ENCODE measurements at regions of chr10 and their contacts with region 1.

Region 1: GRCh38 chr10:108544494-108545120 is 1378.7 kb downstream of the XPNPEP1 start:
- DNase-seq: peak in 3 of 5 donors; percentile 40 to 64 (median 55)
- ATAC-seq: peak in 2 of 4 donors; percentile 42 to 51
- H3K4me3 ChIP-seq: no peak overlapping the region
- H3K27ac ChIP-seq: no peak overlapping the region
- H3K4me1 ChIP-seq: no peaks in the 10 kb centered on the region
- H3K27me3 ChIP-seq: no peaks in the 10 kb centered on the region
- CTCF ChIP-seq: peak; percentile 59 to 85 (median 73)
- POLR2A ChIP-seq: no peak

Region 2: GRCh38 chr10:106625751-106626150 is 1918.9 kb before region 1 on chr10:
- intact Hi-C with region 1: loop called in 2 of 10 experiments (anchors 10 kb)
- DNase-seq: no peak
- ATAC-seq: no peak
- H3K4me3 ChIP-seq: no peak overlapping the region
- H3K27ac ChIP-seq: no peak overlapping the region
- H3K4me1 ChIP-seq: no peaks in the 10 kb centered on the region
- H3K27me3 ChIP-seq: peaks cover 0 to 11% (median 0%) of the 10 kb centered on the region in 9 donors
- CTCF ChIP-seq: no peak
- POLR2A ChIP-seq: no peak

Region 3: DNA sequence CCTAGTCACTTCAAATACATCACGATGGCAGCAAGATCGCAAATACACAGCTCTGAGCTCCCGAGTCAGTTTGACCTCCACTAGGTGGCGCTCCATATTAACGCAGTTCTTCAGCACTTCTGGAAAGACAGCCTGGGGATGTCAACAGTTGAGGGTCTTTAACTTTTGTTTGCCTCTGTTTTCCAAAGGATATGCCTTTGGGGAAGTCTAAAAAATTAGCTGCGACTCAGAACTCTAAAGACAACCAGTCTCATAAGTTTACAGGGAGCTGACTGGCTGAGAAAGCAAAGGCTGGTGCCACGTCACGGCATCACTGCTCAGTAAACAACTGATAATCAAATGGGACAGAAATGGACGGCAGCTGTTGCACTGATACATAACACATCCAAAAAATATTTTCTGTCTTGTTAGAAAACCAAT is 1838.9 kb before region 1 on chr10:
- intact Hi-C with region 1: loop called in 3 of 10 experiments (anchors 10 kb)
- DNase-seq: peak in 4 of 5 donors; percentile 33 to 49 (median 43)
- ATAC-seq: peak in 3 of 4 donors; percentile 55 to 77 (median 60)
- H3K4me3 ChIP-seq: peak overlapping the region in 4 of 12 donors; percentile 11 to 40 (median 37)
- H3K27ac ChIP-seq: no peak overlapping the region
- H3K4me1 ChIP-seq: no peaks in the 10 kb centered on the region
- H3K27me3 ChIP-seq: peaks cover 0 to 11% (median 0%) of the 10 kb centered on the region in 9 donors
- CTCF ChIP-seq: peak; percentile 57 to 79 (median 74)
- POLR2A ChIP-seq: no peak

Region 4: DNA sequence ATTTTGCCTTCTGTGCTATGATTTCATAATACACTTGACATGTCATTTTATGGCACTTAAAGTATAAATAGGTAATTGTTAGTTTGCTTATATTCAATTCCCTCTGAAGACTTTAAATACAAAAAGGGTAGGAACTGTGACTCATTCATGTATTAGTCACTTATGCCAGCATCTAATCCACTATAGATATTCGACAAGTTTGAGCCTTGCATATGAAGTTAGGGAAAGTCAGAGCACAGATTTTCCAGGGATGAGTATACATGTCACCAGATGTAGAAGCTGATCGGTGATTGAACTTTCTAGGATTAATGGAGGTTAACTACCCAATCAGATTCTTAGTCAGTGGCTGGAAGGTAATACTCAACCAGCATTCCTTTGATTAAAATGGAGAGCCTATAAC is 57.2 kb after region 1 on chr10:
- intact Hi-C with region 1: no loop called
- DNase-seq: no peak
- ATAC-seq: no peak
- H3K4me3 ChIP-seq: no peak overlapping the region
- H3K27ac ChIP-seq: no peak overlapping the region
- H3K4me1 ChIP-seq: no peaks in the 10 kb centered on the region
- H3K27me3 ChIP-seq: no peaks in the 10 kb centered on the region
- CTCF ChIP-seq: no peak
- POLR2A ChIP-seq: no peak

Region 5: GRCh38 chr10:109852475-109853037 is 1307.9 kb after region 1 on chr10:
- intact Hi-C with region 1: loop called in 1 of 10 experiments (anchors 10 kb)
- DNase-seq: peak; percentile 71 to 85 (median 74)
- ATAC-seq: peak; percentile 71 to 90 (median 82)
- H3K4me3 ChIP-seq: no peak overlapping the region
- H3K27ac ChIP-seq: no peak overlapping the region
- H3K4me1 ChIP-seq: peaks cover 0 to 18% (median 6%) of the 10 kb centered on the region in 12 donors
- H3K27me3 ChIP-seq: no peaks in the 10 kb centered on the region
- CTCF ChIP-seq: peak; percentile 80 to 96 (median 92)
- POLR2A ChIP-seq: no peak